ENCODE measurements at regions of chr12 and their contacts with region 1.

Region 1: GRCh38 chr12:120710031-120710804 is at the start of gene UNC119B:
- DNase-seq: peak; percentile 33
- ATAC-seq: peak; percentile 93
- H3K4me3 ChIP-seq: peak within 1 kb of the TSS; percentile 93
- H3K27ac ChIP-seq: peak within 1 kb of the TSS; percentile 83
- H3K4me1 ChIP-seq: peaks cover 3% of the 10 kb centered on the region
- H3K27me3 ChIP-seq: no peaks in the 10 kb centered on the region
- CTCF ChIP-seq: no peak
- POLR2A ChIP-seq: peak; percentile 39; the same call in 1 of the 2 replicates
- RAD21 ChIP-seq: no peak
- total RNA-seq, gene UNC119B: 8.4 and 10.3 TPM in 2 replicates

Region 2: GRCh38 chr12:120327593-120327992 is 382.6 kb before region 1 on chr12 and contains the start of gene PLA2G1B:
- CTCF ChIA-PET with region 1: no interaction called
- POLR2A ChIA-PET with region 1: no interaction called
- dilution Hi-C with region 1: no loop called
- in situ Hi-C with region 1: no loop called
- intact Hi-C with region 1: loop called (anchors 5 kb)
- DNase-seq: no peak
- ATAC-seq: no peak
- H3K4me3 ChIP-seq: no peak within 1 kb of the TSS
- H3K27ac ChIP-seq: no peak within 1 kb of the TSS
- H3K4me1 ChIP-seq: no peaks in the 10 kb centered on the region
- H3K27me3 ChIP-seq: peaks cover 14% of the 10 kb centered on the region; the same call in 1 of the 2 replicates
- CTCF ChIP-seq: no peak
- POLR2A ChIP-seq: no peak
- RAD21 ChIP-seq: no peak
- total RNA-seq, gene PLA2G1B: not detected in 2 replicates

Region 3: DNA sequence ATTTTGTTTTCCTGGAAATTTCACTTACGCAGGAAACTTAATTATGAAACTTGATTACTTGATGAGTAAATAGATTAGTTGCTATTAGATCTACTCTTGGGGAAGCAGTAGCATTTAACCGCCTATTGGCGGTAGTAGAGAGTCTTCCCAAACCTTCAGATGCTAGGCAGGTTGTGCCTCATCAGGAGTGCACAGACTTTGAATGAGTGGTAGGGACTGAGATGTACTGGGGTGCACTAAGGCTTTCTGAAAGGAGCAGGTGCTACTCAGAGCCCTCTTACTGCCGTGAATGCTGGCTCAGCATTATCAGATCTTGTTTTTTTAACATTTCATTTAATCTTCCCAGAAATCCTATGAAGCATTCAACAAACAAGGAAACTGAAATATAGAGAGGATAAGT is 256.2 kb before region 1 on chr12:
- CTCF ChIA-PET with region 1: no interaction called
- POLR2A ChIA-PET with region 1: no interaction called
- dilution Hi-C with region 1: no loop called
- in situ Hi-C with region 1: no loop called
- intact Hi-C with region 1: no loop called
- DNase-seq: peak; percentile 19
- ATAC-seq: peak; percentile 68
- H3K4me3 ChIP-seq: no peak overlapping the region
- H3K27ac ChIP-seq: no peak overlapping the region
- H3K4me1 ChIP-seq: no peaks in the 10 kb centered on the region
- H3K27me3 ChIP-seq: no peaks in the 10 kb centered on the region
- CTCF ChIP-seq: peak; percentile 56
- POLR2A ChIP-seq: no peak
- RAD21 ChIP-seq: peak; percentile 18; the same call in 1 of the 2 replicates

Region 4: DNA sequence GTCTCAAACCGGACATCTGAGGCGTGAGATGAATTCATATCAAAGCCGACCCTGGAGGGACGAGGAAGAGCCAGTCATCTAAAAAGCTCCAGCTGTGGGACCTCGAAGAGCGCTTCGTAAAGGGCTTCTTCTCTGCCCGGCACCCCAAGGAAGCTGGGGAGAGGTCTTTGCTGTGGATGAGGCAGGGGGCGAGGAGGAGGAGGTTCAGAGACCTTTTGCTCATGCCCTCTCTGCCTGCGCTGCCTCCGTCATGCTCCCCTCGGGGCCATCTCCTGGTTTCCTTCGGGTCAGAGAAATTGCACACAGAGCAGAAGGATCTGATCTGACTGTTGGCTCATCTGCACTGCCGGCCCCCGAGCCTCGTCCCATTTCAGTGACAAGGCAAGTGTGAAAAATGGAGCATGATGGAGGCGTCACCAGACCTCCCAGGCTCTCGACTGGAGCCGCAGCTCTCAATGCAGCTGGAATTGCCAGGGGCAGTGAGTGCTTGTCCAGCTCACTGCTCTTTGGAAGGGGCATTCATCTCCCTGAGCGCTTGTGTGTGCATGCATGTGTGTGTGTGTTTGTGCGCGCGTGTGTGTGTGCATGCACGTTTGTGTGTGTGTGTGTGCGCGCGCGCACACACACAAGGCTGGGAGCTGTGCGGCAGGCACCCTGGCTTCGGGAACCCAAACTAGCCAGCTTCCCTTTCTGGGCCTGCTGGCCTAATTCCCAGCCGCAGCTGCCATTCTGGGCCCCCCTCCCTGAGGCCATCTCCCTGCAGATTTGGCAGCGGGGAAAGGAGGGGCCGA is 60.6 kb before region 1 on chr12:
- CTCF ChIA-PET with region 1: interaction called, 10 read pairs
- POLR2A ChIA-PET with region 1: interaction called, 4 read pairs
- dilution Hi-C with region 1: no loop called
- in situ Hi-C with region 1: no loop called
- intact Hi-C with region 1: loop called (anchors 1 kb)
- DNase-seq: peak; percentile 5
- ATAC-seq: no peak
- H3K4me3 ChIP-seq: peak overlapping the region; percentile 14; the same call in 1 of the 2 replicates
- H3K27ac ChIP-seq: no peak overlapping the region
- H3K4me1 ChIP-seq: peaks cover 3% of the 10 kb centered on the region; the same call in 1 of the 2 replicates
- H3K27me3 ChIP-seq: peaks cover 54% of the 10 kb centered on the region
- CTCF ChIP-seq: no peak
- POLR2A ChIP-seq: no peak
- RAD21 ChIP-seq: no peak

Region 5: DNA sequence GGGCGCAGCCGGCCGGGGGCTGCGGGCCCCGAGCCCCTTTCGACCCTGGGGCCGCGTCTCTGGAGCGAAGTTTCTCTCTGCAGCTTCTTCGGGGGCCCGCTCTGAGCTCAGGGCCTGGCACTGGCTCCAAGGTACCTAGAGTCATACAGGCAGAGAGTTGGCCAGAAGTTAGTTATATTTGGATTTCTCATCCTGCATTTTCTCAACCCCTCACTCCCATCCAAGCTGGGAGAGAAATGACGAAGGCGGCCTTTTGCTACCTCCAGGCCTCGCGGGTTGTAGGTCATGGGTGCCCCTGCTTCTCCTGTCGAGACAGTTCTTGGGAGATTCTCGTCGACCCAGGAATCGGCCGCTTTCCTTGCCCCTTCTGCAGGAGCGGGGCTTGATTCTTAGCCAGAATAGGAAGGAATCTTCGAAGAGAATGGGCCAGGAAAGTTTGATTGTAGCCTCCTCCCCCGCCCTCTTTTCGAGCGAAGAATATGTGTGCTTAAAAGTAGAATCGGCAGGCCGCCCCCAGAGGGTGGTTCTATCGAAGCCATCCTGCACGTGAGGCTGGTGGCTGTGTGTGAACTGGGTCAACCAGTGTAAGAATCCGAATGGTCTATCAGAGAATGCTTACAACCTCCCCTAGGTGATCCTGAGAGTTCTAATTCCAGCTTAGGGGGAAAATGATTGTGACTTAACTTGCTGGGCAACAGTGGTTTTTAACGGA is 22.5 kb before region 1 on chr12:
- CTCF ChIA-PET with region 1: no interaction called
- POLR2A ChIA-PET with region 1: no interaction called
- dilution Hi-C with region 1: no loop called
- in situ Hi-C with region 1: no loop called
- intact Hi-C with region 1: loop called (anchors 2 kb)
- DNase-seq: no peak
- ATAC-seq: no peak
- H3K4me3 ChIP-seq: peak overlapping the region; percentile 86
- H3K27ac ChIP-seq: peak overlapping the region; percentile 76
- H3K4me1 ChIP-seq: peaks cover 10% of the 10 kb centered on the region
- H3K27me3 ChIP-seq: no peaks in the 10 kb centered on the region
- CTCF ChIP-seq: no peak
- POLR2A ChIP-seq: no peak
- RAD21 ChIP-seq: no peak

Region 6: DNA sequence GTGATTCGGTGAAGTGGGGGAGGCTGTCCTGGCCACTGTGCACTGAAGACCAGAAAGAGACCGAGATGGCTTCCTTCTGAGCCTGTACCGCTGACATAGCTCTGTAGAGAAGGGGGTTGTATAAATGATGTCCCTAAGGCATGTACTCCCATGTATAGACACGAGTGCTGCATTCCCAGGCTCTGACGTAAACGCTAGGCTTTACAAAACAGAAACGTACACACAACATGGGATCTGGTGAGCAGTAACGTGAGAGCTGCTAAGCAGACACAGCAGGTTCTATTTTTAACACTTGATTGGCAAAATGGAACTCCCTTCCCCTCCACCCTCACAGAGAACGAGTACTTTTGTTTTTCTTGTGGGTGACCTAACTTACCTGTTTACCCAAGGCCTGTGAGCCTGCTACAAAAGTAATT is 51.3 kb after region 1 on chr12:
- CTCF ChIA-PET with region 1: no interaction called
- POLR2A ChIA-PET with region 1: interaction called, 11 read pairs
- dilution Hi-C with region 1: no loop called
- in situ Hi-C with region 1: no loop called
- intact Hi-C with region 1: no loop called
- DNase-seq: peak; percentile 57
- ATAC-seq: 0 out of 2 replicates have a peak, but pooled peaks have one; percentile 17
- H3K4me3 ChIP-seq: no peak overlapping the region
- H3K27ac ChIP-seq: no peak overlapping the region
- H3K4me1 ChIP-seq: no peaks in the 10 kb centered on the region
- H3K27me3 ChIP-seq: no peaks in the 10 kb centered on the region
- CTCF ChIP-seq: no peak
- POLR2A ChIP-seq: no peak
- RAD21 ChIP-seq: no peak

Region 7: GRCh38 chr12:120971299-120972179 is 261.3 kb after region 1 on chr12:
- CTCF ChIA-PET with region 1: no interaction called
- POLR2A ChIA-PET with region 1: no interaction called
- dilution Hi-C with region 1: no loop called
- in situ Hi-C with region 1: no loop called
- intact Hi-C with region 1: loop called (anchors 5 kb)
- DNase-seq: peak; percentile 63
- ATAC-seq: peak; percentile 92
- H3K4me3 ChIP-seq: no peak overlapping the region
- H3K27ac ChIP-seq: no peak overlapping the region
- H3K4me1 ChIP-seq: no peaks in the 10 kb centered on the region
- H3K27me3 ChIP-seq: peaks cover 14% of the 10 kb centered on the region; the same call in 1 of the 2 replicates
- CTCF ChIP-seq: peak; percentile 84
- POLR2A ChIP-seq: no peak
- RAD21 ChIP-seq: peak; percentile 79

Measured in IMR-90 (cell line).